Activated naive CD4-positive, alpha-beta T cell treated with anti-CD3 and anti-CD28 coated beads for 36 hours (primary cell): ENCODE measurements at regions of chr11 and their contacts with region 1.

Region 1: DNA sequence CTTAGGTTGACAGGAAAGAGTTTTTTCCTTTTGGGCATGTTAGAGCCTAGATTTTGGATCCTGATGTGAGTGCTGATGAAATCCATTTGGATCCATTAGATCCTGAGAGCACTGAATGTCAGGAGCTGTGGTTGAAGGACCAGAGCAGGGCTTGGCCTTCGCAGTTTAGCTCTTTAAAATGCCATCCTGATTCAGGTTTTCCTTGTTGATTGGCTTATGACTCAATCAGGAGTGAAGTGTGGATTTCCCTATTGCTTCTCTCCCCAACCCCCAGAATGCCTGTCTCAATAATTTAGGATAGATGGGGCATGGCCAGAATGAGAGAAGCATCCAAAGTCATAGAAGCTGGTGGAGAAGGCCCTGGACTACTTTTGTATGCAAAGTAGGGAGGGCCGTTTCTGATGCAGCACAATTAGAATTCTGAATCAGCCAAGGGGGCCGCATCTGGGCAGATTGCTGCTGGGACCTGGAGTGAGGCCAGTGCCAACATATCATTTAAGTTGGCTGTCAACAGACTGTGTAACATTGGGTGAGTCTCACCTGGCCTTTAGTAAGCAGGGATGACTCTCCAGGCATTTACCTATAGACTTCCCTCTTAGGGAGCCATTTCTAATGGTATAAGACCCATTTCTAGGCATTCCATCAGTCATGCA is 80.5 kb downstream of the TEAD1 start:
- DNase-seq: no peak
- H3K4me3 Mint-ChIP-seq: no peak overlapping the region
- H3K27ac Mint-ChIP-seq: no peak overlapping the region
- H3K4me1 Mint-ChIP-seq: no peaks in the 10 kb centered on the region
- H3K27me3 Mint-ChIP-seq: peaks cover 2% of the 10 kb centered on the region

Region 2: GRCh38 chr11:11297578-11297977 is 1457.1 kb before region 1 on chr11:
- CTCF ChIA-PET with region 1: no interaction called
- intact Hi-C with region 1: loop called (anchors 5 kb)
- DNase-seq: no peak
- H3K4me3 Mint-ChIP-seq: no peak overlapping the region
- H3K27ac Mint-ChIP-seq: no peak overlapping the region
- H3K4me1 Mint-ChIP-seq: no peaks in the 10 kb centered on the region
- H3K27me3 Mint-ChIP-seq: no peaks in the 10 kb centered on the region

Region 3: GRCh38 chr11:12813371-12814225 is 58.9 kb after region 1 on chr11:
- CTCF ChIA-PET with region 1: no interaction called
- intact Hi-C with region 1: no loop called
- DNase-seq: no peak
- H3K4me3 Mint-ChIP-seq: no peak overlapping the region
- H3K27ac Mint-ChIP-seq: no peak overlapping the region
- H3K4me1 Mint-ChIP-seq: peaks cover 4% of the 10 kb centered on the region
- H3K27me3 Mint-ChIP-seq: peaks cover 50% of the 10 kb centered on the region

Region 4: GRCh38 chr11:13680501-13681264 is 926.0 kb after region 1 on chr11:
- CTCF ChIA-PET with region 1: no interaction called
- intact Hi-C with region 1: no loop called
- DNase-seq: no peak
- H3K4me3 Mint-ChIP-seq: no peak overlapping the region
- H3K27ac Mint-ChIP-seq: no peak overlapping the region
- H3K4me1 Mint-ChIP-seq: peaks cover 46% of the 10 kb centered on the region
- H3K27me3 Mint-ChIP-seq: no peaks in the 10 kb centered on the region